ENCODE measurements at regions of chr10 and their contacts with region 1.

Region 1: GRCh38 chr10:35644045-35644950 is 2.2 kb upstream of the FZD8 start:
- DNase-seq: no peak
- H3K4me3 ChIP-seq: peak overlapping the region; percentile 83
- H3K27ac ChIP-seq: no peak overlapping the region
- H3K27me3 ChIP-seq: no peaks in the 10 kb centered on the region
- CTCF ChIP-seq: no peak

Region 2: DNA sequence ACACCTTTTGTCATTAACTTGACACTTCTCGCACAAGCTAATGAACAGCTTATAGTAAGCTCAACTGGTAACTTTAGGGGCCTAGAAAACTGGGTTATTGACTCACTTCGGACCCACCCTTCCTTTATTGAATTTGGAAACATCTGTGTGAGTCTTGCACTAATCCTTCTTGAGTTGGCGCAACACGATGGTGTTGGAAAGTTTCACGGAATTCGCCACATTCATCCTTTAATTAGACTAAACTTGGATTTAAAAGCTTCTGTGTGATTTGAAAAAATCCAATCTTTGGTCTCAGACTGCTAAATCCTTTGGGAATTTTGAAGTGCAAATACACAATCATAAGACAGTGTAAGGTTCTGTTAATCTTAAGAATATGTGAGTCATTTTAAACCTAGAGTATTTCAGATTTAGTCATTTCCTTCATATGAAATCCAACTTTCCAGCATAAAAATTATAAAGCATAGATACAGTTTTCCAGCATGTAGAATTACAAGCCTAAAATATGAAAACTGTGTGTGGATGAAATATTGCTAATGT is 17.3 kb before region 1 on chr10:
- CTCF ChIA-PET with region 1: no interaction called
- POLR2A ChIA-PET with region 1: no interaction called
- DNase-seq: no peak
- H3K4me3 ChIP-seq: no peak overlapping the region
- H3K27ac ChIP-seq: no peak overlapping the region
- H3K27me3 ChIP-seq: no peaks in the 10 kb centered on the region
- CTCF ChIP-seq: no peak

Region 3: DNA sequence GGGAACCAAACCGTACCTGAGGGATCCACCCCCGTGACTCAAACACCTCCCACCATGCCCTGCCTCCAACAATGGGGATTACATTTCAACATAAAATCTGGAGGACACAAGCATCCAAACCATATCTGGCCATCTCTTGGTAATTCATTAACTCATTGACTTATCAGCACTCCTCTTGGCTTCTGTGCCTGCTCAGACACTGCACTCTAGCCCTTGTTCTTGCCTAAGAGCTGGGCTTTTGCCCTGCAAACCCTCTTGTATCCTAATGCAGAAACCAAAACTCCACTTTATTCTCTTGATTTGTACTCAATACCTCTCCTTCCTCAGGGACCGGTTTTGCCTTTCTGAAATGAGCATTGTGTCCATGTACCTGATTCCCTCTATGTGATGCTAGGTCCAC is 328.0 kb after region 1 on chr10:
- CTCF ChIA-PET with region 1: no interaction called
- POLR2A ChIA-PET with region 1: no interaction called
- DNase-seq: no peak
- H3K4me3 ChIP-seq: no peak overlapping the region
- H3K27ac ChIP-seq: no peak overlapping the region
- H3K27me3 ChIP-seq: no peaks in the 10 kb centered on the region
- CTCF ChIP-seq: no peak

Region 4: DNA sequence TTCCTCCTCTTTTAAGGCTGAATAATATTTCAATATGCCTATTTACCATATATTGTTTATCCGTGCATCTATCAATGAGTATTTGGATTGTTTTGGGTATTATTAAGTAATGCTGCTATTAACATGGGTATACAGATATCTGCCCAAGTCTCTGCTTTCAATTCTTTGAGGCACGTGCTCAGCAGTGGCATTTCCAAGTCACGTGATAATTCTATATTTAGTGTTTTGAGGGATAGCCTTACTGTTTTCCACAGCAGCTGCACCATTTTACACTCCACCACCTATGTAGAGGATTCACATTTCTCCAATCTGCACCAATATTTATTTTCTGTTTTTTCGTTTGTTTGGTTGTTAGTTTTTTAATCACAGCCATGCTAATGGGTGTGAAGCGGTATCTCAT is 844.3 kb after region 1 on chr10:
- CTCF ChIA-PET with region 1: no interaction called
- POLR2A ChIA-PET with region 1: interaction called, 10 read pairs
- DNase-seq: no peak
- H3K4me3 ChIP-seq: no peak overlapping the region
- H3K27ac ChIP-seq: no peak overlapping the region
- H3K27me3 ChIP-seq: no peaks in the 10 kb centered on the region
- CTCF ChIP-seq: no peak

Measured in AG04450 (cell line).